AG04449 (cell line): ENCODE measurements at regions of chr2 and their contacts with region 1.

Region 1: GRCh38 chr2:113198790-113199612 is 25.2 kb downstream of the PSD4 start:
- DNase-seq: no peak
- H3K4me3 ChIP-seq: peak overlapping the region; percentile 83
- CTCF ChIP-seq: peak; percentile 89

Region 2: DNA sequence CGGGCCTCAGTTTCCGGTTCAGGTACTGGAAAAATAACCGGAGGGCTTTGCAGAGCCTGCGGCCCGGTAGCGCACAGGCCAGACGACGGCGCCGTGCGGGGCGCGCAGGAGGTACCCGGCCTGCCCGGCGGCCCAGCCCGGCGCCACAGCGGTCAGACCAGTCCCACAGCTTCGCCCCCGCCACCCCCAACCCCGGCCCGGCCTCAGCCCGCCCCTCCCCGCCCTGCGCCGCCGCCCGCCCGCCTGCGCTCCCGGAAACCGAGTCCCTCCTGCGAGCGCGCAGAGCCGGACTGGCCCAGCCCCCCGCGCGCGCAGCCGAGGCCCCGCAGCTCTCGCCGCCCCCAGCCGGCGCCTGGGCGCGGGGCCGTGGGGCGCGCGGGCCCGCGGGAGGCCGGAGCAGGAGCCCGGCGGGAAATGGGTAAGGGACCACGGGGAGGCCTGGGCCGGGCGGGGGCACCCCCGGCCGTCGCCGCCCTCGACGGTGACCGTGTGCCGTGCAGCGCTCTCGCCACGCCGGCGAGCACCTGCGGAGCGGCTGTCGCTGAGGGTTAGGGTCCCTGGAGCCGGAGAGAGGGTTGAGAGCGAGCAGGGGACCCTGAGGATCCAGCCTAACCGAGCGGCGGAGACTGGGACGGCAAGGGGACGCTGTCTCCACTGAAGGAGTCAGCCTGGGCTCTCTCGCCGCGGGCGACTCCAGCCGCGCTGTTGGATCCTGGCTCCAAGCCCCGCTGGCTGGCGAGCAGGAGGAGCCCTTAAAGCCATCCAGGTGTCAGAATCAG is 41.7 kb before region 1 on chr2:
- CTCF ChIA-PET with region 1: interaction called, 12 read pairs
- POLR2A ChIA-PET with region 1: no interaction called
- DNase-seq: no peak
- H3K4me3 ChIP-seq: peak overlapping the region; percentile 50
- CTCF ChIP-seq: no peak

Region 3: DNA sequence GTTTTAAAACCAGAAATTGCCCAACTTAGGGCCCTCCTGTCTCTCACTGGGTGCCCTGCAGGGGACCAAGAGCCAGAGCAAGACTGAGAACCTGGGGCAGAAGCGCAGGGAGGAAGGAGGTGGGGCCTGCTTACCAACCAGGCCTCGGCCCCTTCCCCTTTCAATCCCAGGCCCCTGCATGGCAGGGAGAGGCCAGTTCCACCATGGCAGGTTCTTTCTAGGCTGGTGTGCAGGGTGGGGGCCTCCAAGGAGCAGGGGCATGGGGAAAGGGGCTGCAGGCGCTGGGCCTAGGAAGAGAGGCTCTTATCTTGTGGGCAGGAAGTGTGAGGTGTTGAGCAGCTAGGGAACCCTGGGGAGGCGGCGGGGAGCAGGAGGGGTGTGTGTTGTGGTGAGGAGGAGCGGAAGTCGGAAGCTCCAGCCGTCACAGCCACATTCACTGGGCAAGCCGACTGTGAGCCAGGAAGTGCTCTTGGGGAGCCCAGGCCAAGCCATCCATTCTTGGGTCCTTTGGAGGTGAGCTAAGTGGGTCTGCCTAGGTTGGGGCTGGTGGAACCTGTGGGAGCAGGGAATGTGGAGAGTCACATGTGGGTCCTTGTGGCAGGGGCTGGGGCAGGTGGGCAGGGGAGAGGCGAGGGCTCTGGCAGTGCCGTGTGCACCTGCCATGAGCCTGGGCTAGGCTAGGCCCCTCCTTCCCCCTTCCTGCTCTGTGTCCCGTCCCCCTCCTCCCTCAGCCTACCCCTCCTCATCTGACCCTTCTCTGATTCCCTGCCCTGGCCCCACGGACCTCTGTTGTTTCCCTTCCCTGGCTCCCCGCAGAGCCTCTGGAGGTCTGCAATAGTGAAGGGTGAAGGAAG is 25.2 kb before region 1 on chr2 and contains the start of gene PSD4:
- CTCF ChIA-PET with region 1: interaction called, 28 read pairs
- POLR2A ChIA-PET with region 1: interaction called, 3 read pairs
- DNase-seq: no peak
- H3K4me3 ChIP-seq: no peak within 1 kb of the TSS
- CTCF ChIP-seq: no peak

Region 4: GRCh38 chr2:113219889-113220641 is 21.1 kb after region 1 on chr2:
- CTCF ChIA-PET with region 1: interaction called, 180 read pairs
- POLR2A ChIA-PET with region 1: no interaction called
- DNase-seq: no peak
- H3K4me3 ChIP-seq: no peak overlapping the region
- CTCF ChIP-seq: no peak

Region 5: GRCh38 chr2:113257516-113258264 is 58.7 kb after region 1 on chr2:
- CTCF ChIA-PET with region 1: interaction called, 27 read pairs
- POLR2A ChIA-PET with region 1: no interaction called
- DNase-seq: no peak
- H3K4me3 ChIP-seq: no peak overlapping the region
- CTCF ChIP-seq: no peak

Region 6: DNA sequence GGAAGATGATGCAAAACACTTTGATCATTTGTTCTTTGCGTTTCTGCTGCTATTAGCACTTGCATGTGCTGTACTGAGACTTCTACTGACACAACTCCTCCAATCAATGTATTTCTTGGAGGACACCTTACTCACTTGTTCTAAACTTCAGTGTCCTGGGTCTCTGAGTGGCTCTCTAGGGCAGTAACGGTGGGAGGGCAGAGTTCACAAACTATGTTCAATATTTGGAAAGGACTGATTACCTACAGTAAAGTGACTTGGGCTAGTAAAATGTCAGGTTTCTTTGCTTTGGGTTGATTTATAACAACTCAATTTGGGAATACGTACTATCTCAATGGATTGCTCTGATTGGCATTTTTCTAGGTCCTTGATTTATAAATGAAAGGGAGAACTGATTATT is 129.0 kb after region 1 on chr2:
- CTCF ChIA-PET with region 1: no interaction called
- POLR2A ChIA-PET with region 1: no interaction called
- DNase-seq: no peak
- H3K4me3 ChIP-seq: no peak overlapping the region
- CTCF ChIP-seq: no peak